ENCODE measurements at regions of chr22 and their contacts with region 1.

Region 1: GRCh38 chr22:19918332-19919106 is 23.1 kb upstream of the COMT start:
- DNase-seq: no peak
- H3K4me3 ChIP-seq: no peak overlapping the region
- CTCF ChIP-seq: no peak
- POLR2A ChIP-seq: no peak

Region 2: GRCh38 chr22:19730655-19731360 is 187.7 kb before region 1 on chr22:
- intact Hi-C with region 1: loop called (anchors 5 kb)
- DNase-seq: peak; percentile 70 to 97
- H3K4me3 ChIP-seq: no peak overlapping the region
- CTCF ChIP-seq: peak in 2 of 3 donors; percentile 29 to 81
- POLR2A ChIP-seq: no peak

Region 3: GRCh38 chr22:19854778-19855503 is 63.6 kb before region 1 on chr22 and contains the starts of genes GNB1L and RTL10:
- intact Hi-C with region 1: no loop called
- DNase-seq: peak; percentile 94 to 99
- H3K4me3 ChIP-seq: peak within 1 kb of the TSS; percentile 86
- CTCF ChIP-seq: no peak
- POLR2A ChIP-seq: peak in 1 of 2 donors; percentile 36
- total RNA-seq, gene GNB1L: 10.0 to 16.2 (median 11.2) TPM
- total RNA-seq, gene RTL10: 24.5 to 28.0 (median 27.1) TPM